ENCODE measurements at regions of chr7 and their contacts with region 1.

Region 1: DNA sequence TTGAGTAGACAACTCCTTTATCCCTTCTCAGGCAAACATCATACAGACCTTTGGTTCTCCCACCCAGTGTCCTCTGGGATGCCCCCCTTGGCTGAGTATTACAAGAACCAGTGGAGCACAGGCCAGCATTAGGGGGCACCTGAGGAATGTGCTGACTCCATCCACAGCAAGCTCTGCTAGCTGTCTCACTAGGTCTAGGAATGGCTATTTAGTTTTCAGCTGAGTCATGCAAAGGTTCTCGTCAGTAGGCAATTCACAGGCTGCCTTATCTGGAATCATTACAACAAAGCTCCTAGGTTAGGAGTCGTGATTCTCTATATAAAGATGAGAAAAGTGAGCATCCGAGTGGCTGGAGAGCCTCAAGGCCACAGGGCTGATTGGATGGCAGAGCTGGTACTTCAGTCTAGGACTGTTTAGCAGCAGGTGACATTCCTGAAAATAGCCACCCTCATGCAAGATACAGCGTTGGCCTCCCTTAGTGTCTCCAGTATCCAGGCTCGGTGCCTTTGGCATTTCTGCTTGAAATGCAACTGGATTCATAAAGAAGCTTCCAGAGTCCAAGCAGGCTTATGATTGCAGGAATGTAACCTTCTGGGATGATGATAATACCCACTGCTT is 75.8 kb downstream of the CDCA7L start:
- DNase-seq: no peak
- H3K4me3 ChIP-seq: no peak overlapping the region
- H3K27ac ChIP-seq: no peak overlapping the region
- H3K4me1 ChIP-seq: no peaks in the 10 kb centered on the region
- H3K27me3 ChIP-seq: no peaks in the 10 kb centered on the region
- CTCF ChIP-seq: no peak
- EP300 ChIP-seq: no peak
- POLR2A ChIP-seq: no peak

Region 2: GRCh38 chr7:21908746-21909145 is 38.9 kb after region 1 on chr7:
- in situ Hi-C with region 1: no loop called
- intact Hi-C with region 1: loop called (anchors 1 kb)
- DNase-seq: no peak
- H3K4me3 ChIP-seq: no peak overlapping the region
- H3K27ac ChIP-seq: no peak overlapping the region
- H3K4me1 ChIP-seq: no peaks in the 10 kb centered on the region
- H3K27me3 ChIP-seq: no peaks in the 10 kb centered on the region
- CTCF ChIP-seq: no peak
- EP300 ChIP-seq: no peak
- POLR2A ChIP-seq: no peak

Region 3: DNA sequence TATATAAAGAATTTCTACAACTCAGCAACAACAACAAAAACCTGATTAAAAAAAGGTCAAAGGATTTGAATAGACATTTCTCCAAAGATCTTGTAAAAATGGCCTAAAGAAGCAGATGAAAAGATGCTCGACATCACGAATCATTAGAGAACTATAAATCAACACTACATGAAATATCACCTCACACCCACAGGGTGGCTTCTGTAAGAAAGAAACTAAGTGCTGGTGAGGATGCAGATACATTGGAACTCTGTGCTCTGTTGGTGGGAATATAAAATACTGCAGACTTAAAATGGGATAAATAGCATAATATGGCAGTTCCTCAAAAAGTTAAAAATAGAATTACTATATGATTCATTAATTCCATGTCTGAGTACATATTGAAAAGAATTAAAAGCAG is 114.1 kb after region 1 on chr7:
- in situ Hi-C with region 1: no loop called
- intact Hi-C with region 1: no loop called
- DNase-seq: no peak
- H3K4me3 ChIP-seq: no peak overlapping the region
- H3K27ac ChIP-seq: no peak overlapping the region
- H3K4me1 ChIP-seq: no peaks in the 10 kb centered on the region
- H3K27me3 ChIP-seq: no peaks in the 10 kb centered on the region
- CTCF ChIP-seq: no peak
- EP300 ChIP-seq: no peak
- POLR2A ChIP-seq: no peak

Region 4: DNA sequence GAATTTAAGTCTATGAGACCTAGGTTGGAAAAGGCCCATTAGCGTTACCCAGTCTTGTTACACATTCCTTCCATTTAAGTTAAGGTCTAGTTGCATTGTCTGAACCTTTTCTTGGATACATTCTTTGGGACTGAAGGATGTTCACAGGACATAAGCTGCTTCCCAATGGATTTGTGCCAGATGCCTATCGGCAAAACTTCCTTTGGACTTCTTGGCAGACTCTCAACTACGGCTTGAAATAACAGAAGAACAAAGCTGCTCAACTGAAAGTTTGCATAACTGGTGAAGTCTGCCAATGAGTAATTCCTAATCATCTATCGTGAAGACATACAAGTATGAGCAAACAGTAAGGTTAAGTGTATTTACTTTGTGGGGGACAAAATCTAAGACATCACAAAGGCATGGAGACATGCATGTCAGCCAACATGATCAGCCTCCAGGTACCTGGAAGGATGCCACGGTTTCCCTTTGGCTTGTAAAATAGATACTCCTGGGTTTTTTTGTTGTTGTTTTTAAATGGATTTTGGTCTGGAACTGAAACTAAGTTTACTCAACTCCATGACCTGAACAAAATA is 1464.7 kb after region 1 on chr7:
- in situ Hi-C with region 1: no loop called
- intact Hi-C with region 1: no loop called
- DNase-seq: no peak
- H3K4me3 ChIP-seq: no peak overlapping the region
- H3K27ac ChIP-seq: peak overlapping the region in 2 of 4 donors; percentile 7 to 23
- H3K4me1 ChIP-seq: peaks cover 0 to 25% (median 2%) of the 10 kb centered on the region in 4 donors
- H3K27me3 ChIP-seq: peaks cover 38% of the 10 kb centered on the region
- CTCF ChIP-seq: no peak
- EP300 ChIP-seq: no peak
- POLR2A ChIP-seq: no peak